Activated T-helper 1 cell treated with anti-CD3 and anti-CD28 coated beads, Interleukin-12 subunit alpha, Interleukin-12 subunit beta, Interleukin-2, Interleukin-4 antibody, amounts not matched to agents 30 ng/mL and 10 ng/mL and 1 ng/mL, durations not matched to agents 14 hours and 24 hours and 36 hours (primary cell): ENCODE measurements at regions of chr10 and their contacts with region 1.

Region 1: GRCh38 chr10:122879339-122880273 is at the start of gene FAM24B:
- DNase-seq: peak; percentile 94
- H3K4me3 Mint-ChIP-seq: peak within 1 kb of the TSS; percentile 97
- H3K27ac Mint-ChIP-seq: peak within 1 kb of the TSS; percentile 93
- H3K4me1 Mint-ChIP-seq: peaks cover 53% of the 10 kb centered on the region
- H3K27me3 Mint-ChIP-seq: no peaks in the 10 kb centered on the region
- total RNA-seq, gene FAM24B: 13.1 and 18.4 TPM in 2 replicates

Region 2: DNA sequence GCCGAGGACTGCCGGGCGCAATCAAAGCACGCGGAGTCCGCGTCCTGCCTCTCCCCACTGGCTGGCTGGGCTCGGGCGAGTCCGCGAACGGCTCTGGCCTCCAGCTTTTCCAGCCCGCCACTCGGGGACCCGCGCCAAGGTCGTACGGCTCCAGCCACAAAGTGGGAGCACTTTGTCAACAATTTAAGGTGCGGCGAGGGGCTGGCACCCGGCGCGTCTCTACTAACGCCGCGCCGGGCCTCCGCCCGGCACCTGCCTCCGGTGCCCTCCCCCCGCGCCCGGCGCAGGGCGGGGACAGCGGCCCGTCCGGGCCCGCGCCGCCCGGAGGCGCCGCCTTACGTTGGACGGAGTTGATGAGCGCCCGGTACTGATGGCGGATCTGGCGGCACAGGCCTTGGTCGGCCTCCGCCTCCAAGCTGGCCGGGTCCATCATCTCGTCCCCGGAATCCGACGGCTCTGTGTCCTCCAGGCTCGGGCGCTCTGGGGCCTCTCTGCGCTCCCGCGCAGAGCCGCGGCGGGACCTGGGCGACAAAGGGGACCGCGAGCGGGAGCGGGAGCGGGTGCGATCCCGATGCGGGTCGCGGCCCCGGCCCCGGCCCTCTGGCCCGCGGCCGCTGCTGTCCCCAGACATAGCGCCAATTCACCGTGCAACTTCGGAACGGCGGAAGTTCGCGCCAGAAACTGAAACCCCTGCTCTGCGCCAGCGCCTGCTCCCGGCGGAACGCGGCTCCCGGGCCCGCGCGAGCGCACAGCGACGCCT is 904.9 kb before region 1 on chr10 and contains the start of gene NSMCE4A:
- intact Hi-C with region 1: loop called (anchors 2 kb)
- DNase-seq: peak; percentile 68
- H3K4me3 Mint-ChIP-seq: peak within 1 kb of the TSS; percentile 89
- H3K27ac Mint-ChIP-seq: no peak within 1 kb of the TSS
- H3K4me1 Mint-ChIP-seq: peaks cover 19% of the 10 kb centered on the region
- H3K27me3 Mint-ChIP-seq: no peaks in the 10 kb centered on the region
- total RNA-seq, gene NSMCE4A: 77.2 and 79.1 TPM in 2 replicates

Region 3: DNA sequence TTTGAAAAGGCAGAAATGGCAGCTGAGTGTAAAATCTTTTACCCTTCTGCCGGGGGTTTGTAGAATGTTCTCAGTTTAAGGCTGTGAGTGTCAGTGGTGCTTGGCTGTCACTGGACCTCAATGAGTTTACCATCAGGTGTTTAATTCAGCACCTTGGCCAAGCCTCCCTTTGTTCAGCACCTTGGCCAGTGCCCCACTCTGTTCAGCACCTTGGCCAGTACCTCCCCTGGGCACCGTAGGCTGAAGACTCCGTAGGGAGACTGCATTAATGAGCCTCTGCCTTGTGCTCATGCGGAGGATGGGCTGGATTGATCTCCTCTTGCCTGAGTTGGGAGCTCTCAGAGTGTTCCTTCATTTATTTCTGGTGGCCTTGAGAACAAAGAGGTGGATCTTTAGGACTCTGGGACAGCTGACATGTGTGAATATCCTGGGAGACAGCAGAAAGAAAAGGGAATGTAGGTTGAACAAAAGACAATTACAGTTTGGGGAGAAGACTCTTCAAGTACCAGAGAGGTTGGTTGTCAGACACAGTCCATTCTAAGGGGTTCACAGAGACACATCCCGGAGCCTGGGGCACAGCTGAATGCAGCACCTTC is 32.4 kb after region 1 on chr10:
- intact Hi-C with region 1: loop called (anchors 1 kb)
- DNase-seq: peak; percentile 46
- H3K4me3 Mint-ChIP-seq: no peak overlapping the region
- H3K27ac Mint-ChIP-seq: no peak overlapping the region
- H3K4me1 Mint-ChIP-seq: no peaks in the 10 kb centered on the region
- H3K27me3 Mint-ChIP-seq: peaks cover 5% of the 10 kb centered on the region

Region 4: GRCh38 chr10:122953827-122954730 is 74.5 kb after region 1 on chr10 and contains the start of gene C10orf88:
- intact Hi-C with region 1: loop called (anchors 1 kb)
- DNase-seq: peak; percentile 97
- H3K4me3 Mint-ChIP-seq: peak within 1 kb of the TSS; percentile 87
- H3K27ac Mint-ChIP-seq: peak within 1 kb of the TSS; percentile 88
- H3K4me1 Mint-ChIP-seq: peaks cover 47% of the 10 kb centered on the region
- H3K27me3 Mint-ChIP-seq: peaks cover 15% of the 10 kb centered on the region
- total RNA-seq, gene C10orf88: 11.8 and 14.1 TPM in 2 replicates

Region 5: GRCh38 chr10:122980209-122981065 is 100.8 kb after region 1 on chr10 and contains the start of gene PSTK:
- intact Hi-C with region 1: loop called (anchors 1 kb)
- DNase-seq: peak; percentile 83
- H3K4me3 Mint-ChIP-seq: peak within 1 kb of the TSS; percentile 87
- H3K27ac Mint-ChIP-seq: peak within 1 kb of the TSS; percentile 97
- H3K4me1 Mint-ChIP-seq: peaks cover 22% of the 10 kb centered on the region
- H3K27me3 Mint-ChIP-seq: peaks cover 12% of the 10 kb centered on the region
- total RNA-seq, gene PSTK: 4.5 and 4.8 TPM in 2 replicates